ENCODE measurements at regions of chr12 and their contacts with region 1.

Region 1: DNA sequence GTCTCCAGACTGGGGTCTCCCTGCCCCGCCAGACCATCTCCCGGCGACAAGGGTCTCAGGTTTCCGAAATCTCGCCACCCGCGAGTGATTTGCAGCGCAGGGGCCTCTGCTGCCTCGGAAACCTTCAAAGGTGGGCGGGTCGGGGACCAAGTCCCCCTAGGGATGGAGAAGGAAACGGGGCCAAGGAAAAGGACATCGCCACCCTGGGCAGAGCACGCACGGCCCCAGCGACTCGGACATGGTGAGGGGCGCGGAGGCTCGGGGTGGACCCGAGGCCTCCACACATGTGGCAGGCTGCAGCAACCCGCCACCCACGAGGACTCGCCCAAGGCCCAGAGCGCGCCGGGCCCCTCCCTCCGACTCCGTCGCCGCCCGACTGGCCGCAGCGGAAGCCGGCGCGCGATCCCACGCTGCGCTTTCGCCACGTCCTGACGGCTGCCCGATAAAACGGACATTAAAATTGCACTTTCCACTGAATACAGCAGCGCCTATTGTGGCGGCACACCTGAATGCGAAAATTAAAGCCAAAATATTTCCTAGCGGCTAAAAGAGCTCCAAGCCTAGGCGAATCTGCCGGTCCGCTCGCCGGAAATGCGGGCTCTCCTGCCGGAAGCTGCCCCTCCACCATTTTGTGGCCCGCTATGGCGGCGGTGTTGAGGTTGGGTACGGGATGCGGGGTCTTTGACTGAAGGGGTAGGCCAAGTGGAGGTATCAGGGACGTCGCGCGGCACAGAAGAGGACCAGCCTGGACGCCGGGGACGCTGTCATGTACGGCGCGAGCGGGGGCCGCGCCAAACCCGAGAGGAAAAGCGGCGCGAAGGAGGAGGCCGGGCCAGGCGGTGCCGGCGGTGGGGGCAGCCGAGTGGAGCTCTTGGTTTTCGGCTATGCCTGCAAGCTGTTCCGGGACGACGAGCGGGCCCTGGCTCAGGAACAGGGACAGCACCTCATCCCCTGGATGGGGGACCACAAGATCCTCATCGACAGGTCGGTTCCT is at the start of gene SFSWAP:
- DNase-seq: peak; percentile 65
- ATAC-seq: peak; percentile 97
- H3K4me3 ChIP-seq: peak within 1 kb of the TSS; percentile 86
- H3K27ac ChIP-seq: peak within 1 kb of the TSS; percentile 89
- H3K4me1 ChIP-seq: peaks cover 5% of the 10 kb centered on the region
- H3K27me3 ChIP-seq: no peaks in the 10 kb centered on the region
- CTCF ChIP-seq: no peak
- POLR2A ChIP-seq: peak; percentile 83
- RAD21 ChIP-seq: no peak
- total RNA-seq, gene SFSWAP: 19.7 and 20.6 TPM in 2 replicates

Region 2: GRCh38 chr12:130761537-130762318 is 949.0 kb before region 1 on chr12:
- CTCF ChIA-PET with region 1: no interaction called
- POLR2A ChIA-PET with region 1: no interaction called
- dilution Hi-C with region 1: no loop called
- in situ Hi-C with region 1: no loop called
- intact Hi-C with region 1: loop called (anchors 5 kb)
- DNase-seq: peak; percentile 41
- ATAC-seq: peak; percentile 93
- H3K4me3 ChIP-seq: no peak overlapping the region
- H3K27ac ChIP-seq: no peak overlapping the region
- H3K4me1 ChIP-seq: no peaks in the 10 kb centered on the region
- H3K27me3 ChIP-seq: no peaks in the 10 kb centered on the region
- CTCF ChIP-seq: peak; percentile 54
- POLR2A ChIP-seq: no peak
- RAD21 ChIP-seq: peak; percentile 71

Region 3: DNA sequence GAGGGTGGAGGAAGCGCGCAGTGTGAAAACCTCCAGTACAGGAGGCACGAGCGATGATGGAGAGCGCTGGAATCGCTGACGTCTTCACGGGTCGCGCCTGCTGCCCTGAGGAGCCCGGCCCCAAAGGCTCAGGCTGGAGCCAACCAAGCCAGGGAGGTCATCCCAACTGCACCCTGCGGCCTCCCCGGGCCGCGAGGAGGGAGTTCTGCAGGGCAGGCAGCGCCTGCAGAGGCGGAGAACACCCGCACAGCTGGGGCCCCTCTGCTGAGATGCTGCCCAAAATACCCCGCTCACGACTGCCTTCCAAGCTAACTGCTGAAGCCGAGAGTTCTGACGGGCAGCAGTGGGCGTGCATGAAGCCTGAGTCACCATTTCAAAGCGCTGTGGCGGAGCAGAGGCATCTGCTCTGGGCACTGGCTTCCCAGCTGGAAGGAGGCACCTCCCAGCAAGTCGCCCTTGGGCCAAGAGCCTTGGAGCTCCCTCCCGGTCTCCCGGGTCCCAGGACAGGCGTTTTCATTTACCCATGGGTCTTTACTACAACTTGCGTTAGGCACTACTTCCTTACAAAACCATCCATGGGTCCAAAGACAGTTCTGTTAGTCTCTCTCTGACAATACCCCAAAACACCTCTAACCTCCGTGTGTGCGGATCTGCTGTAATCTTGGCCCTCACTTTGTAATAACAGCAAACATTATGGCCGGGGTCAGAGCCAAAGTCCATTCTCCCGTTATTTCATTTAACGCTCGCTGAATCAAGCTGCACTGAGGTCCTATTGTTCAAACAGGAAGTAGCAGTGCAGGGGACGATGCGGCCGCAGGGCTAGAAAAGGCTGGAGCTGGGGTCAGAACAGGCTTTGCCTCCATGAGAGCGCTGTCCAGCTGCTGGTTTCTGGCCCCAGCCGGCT is 934.6 kb before region 1 on chr12:
- CTCF ChIA-PET with region 1: no interaction called
- POLR2A ChIA-PET with region 1: no interaction called
- dilution Hi-C with region 1: no loop called
- in situ Hi-C with region 1: no loop called
- intact Hi-C with region 1: loop called (anchors 2 kb)
- DNase-seq: peak; percentile 88
- ATAC-seq: peak; percentile 93
- H3K4me3 ChIP-seq: peak overlapping the region; percentile 15
- H3K27ac ChIP-seq: no peak overlapping the region
- H3K4me1 ChIP-seq: no peaks in the 10 kb centered on the region; the same call in 1 of the 2 replicates
- H3K27me3 ChIP-seq: no peaks in the 10 kb centered on the region; the same call in 1 of the 2 replicates
- CTCF ChIP-seq: no peak
- POLR2A ChIP-seq: no peak
- RAD21 ChIP-seq: peak; percentile 5; the same call in 1 of the 2 replicates

Region 4: DNA sequence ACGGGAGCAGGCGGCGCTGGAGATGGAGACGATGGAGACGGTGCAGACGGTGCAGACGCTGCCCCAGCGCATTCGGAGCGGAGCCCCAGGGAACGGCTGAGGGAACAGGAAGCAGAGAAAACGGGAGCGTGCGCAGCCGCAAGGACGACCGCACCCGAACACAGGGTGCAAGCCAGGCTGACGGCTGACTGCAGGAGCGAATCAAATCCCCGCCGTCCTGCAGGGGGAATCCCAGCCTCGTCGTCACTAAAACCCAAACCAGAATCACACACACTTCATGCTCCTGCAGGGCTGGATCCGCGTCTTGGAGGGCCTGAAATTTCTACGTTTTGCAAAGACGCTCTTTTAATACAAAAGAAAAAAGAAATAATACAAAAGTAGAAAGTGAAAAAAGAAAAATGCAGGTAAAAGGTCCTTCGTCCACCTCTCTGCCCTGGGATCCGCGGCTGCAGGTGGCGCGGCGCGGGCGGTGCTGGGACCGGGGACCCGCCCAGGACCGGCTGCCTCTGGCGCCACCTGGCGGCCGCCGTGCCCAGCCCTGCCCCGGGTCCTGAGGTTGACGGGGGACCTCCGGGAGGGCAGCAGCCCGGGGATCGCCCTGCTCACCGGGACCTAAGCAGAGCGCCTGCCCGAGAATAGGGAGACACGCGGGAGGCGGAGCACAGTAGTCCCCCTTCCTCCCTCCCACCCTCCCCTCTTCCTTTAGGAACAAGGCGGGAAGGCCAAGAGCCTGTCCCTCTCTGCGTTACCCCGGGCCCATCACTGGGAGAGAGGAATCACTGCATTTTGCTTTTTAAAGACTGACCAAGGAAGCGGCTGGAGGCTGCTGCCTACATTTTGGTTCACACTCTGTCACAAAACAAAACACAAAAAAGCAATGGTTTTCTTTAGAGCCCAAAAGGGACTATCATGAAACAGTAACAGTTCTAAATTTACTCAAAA is 891.9 kb before region 1 on chr12:
- CTCF ChIA-PET with region 1: no interaction called
- POLR2A ChIA-PET with region 1: no interaction called
- dilution Hi-C with region 1: no loop called
- in situ Hi-C with region 1: loop called (anchors 25 kb)
- intact Hi-C with region 1: no loop called
- DNase-seq: no peak
- ATAC-seq: peak; percentile 84
- H3K4me3 ChIP-seq: no peak overlapping the region
- H3K27ac ChIP-seq: no peak overlapping the region
- H3K4me1 ChIP-seq: no peaks in the 10 kb centered on the region
- H3K27me3 ChIP-seq: no peaks in the 10 kb centered on the region
- CTCF ChIP-seq: peak; percentile 56
- POLR2A ChIP-seq: no peak
- RAD21 ChIP-seq: peak; percentile 36

Region 5: GRCh38 chr12:130916251-130916911 is 794.4 kb before region 1 on chr12:
- CTCF ChIA-PET with region 1: no interaction called
- POLR2A ChIA-PET with region 1: no interaction called
- dilution Hi-C with region 1: no loop called
- in situ Hi-C with region 1: no loop called
- intact Hi-C with region 1: loop called (anchors 1 kb)
- DNase-seq: peak; percentile 28
- ATAC-seq: peak; percentile 79
- H3K4me3 ChIP-seq: no peak overlapping the region
- H3K27ac ChIP-seq: no peak overlapping the region
- H3K4me1 ChIP-seq: 0 out of 2 replicates have a peak, but pooled peaks cover 1% of the 10 kb centered on the region
- H3K27me3 ChIP-seq: peaks cover 3% of the 10 kb centered on the region
- CTCF ChIP-seq: peak; percentile 75
- POLR2A ChIP-seq: no peak
- RAD21 ChIP-seq: peak; percentile 80

Region 6: DNA sequence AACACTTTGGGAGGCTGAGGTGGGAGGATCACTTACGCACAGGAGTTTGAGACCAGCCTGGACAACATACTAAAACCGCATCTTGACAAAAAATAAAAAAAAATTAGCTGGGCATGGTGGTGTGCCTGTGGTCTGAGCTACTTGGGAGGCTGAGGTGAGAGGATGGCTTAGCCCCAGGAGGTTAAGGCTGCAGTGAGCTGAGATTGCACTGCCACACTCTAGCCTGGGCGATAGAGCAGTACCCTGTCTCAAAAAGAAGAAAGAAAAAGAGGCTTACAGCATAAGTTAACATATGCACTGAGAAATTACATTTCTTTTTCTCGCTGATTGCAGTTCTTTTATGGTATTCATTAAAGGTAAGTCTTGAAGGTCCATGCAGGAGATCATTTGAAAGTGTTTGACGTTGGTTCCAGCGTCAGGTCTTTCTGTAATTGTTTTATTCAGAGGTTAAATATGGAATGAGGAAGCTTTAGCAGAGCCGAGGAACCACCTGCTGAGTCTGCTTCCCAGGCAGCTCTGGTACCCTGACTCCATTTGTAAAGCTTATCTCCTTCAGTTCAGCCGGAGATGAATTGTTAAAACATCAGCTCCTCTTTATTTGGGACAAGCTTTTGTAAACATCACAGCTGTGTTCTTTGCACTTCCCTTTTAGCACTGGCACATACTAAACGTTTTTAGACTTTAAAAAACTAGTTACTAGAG is 18.6 kb after region 1 on chr12:
- CTCF ChIA-PET with region 1: no interaction called
- POLR2A ChIA-PET with region 1: no interaction called
- dilution Hi-C with region 1: no loop called
- in situ Hi-C with region 1: no loop called
- intact Hi-C with region 1: no loop called
- DNase-seq: no peak
- ATAC-seq: no peak
- H3K4me3 ChIP-seq: no peak overlapping the region
- H3K27ac ChIP-seq: no peak overlapping the region
- H3K4me1 ChIP-seq: no peaks in the 10 kb centered on the region
- H3K27me3 ChIP-seq: no peaks in the 10 kb centered on the region
- CTCF ChIP-seq: no peak
- POLR2A ChIP-seq: no peak
- RAD21 ChIP-seq: no peak

Measured in IMR-90 (cell line).